ENCODE measurements at regions of chr13 and their contacts with region 1.

Region 1: GRCh38 chr13:97975848-97976609 is 22.6 kb downstream of the IPO5 start:
- DNase-seq: peak; percentile 75 to 99 (median 90)

Region 2: GRCh38 chr13:97855570-97856303 is 120.3 kb before region 1 on chr13:
- intact Hi-C with region 1: loop called (anchors 2 kb)
- DNase-seq: peak in 3 of 10 donors; percentile 31 to 55 (median 32)

Region 3: GRCh38 chr13:98083507-98083906 is 107.5 kb after region 1 on chr13:
- intact Hi-C with region 1: no loop called
- DNase-seq: no peak

Region 4: GRCh38 chr13:98105929-98106336 is 129.9 kb after region 1 on chr13:
- intact Hi-C with region 1: no loop called
- DNase-seq: no peak

Region 5: DNA sequence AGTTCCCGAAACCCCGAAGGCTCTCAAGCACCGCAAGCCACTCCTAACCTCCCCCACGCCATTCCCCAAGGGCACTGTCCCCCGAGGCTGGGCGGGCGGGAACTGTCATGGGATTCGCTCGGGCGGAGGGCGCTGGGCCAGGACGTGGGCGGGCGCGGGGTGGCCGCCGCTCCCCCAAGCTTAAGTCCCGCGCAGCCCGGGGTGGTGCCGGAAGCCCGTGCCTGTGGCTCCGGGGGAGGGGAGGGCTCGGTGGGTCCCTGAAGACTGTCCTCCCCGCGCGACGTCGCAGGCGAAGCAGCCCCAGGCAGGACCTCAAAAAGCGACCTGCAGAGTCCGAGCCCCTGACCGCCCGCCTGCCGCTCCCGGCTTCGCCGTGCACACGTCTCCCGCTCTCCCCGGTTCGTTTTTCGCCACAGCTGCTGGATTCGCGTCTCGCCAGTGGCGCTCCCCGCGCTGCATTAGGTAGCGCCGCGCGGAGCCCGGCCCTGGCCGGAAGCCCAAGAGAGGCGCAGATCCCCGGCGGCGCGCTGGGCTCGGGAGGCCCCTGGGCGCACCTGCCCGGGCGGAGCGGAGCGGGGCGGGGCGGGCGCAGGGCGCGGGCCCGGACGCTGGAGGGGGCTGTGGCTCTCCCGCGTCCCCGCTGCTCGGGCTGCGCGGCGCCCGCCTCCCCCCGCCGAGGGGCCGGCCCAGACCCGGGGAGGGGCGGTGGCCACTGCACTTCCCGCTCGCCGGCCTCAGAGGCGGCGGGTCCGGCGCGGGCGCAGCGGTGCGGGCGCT is 166.5 kb after region 1 on chr13 and contains the start of gene FARP1:
- intact Hi-C with region 1: loop called (anchors 5 kb)
- DNase-seq: peak in 9 of 10 donors; percentile 32 to 94 (median 52)